HepG2 (cell line): ENCODE measurements at regions of chr10 and their contacts with region 1.

Region 1: GRCh38 chr10:104121520-104122224 is at the start of gene SFR1:
- DNase-seq: peak; percentile 95
- ATAC-seq: peak; percentile 95
- H3K4me3 ChIP-seq: peak within 1 kb of the TSS; percentile 78 to 87 (median 83)
- H3K27ac ChIP-seq: peak within 1 kb of the TSS; percentile 98
- H3K4me1 ChIP-seq: peaks cover 23% of the 10 kb centered on the region
- H3K27me3 ChIP-seq: peaks cover 0 to 2% of the 10 kb centered on the region in 2 experiments; a peak in 1 of 5 replicates
- CTCF ChIP-seq: peak; percentile 90
- EP300 ChIP-seq: no peak; a peak in 1 of 4 replicates
- POLR2A ChIP-seq: peak; percentile 71 to 92
- RAD21 ChIP-seq: peak; percentile 50
- total RNA-seq, gene SFR1: 6.1 and 6.9 TPM in 2 replicates

Region 2: DNA sequence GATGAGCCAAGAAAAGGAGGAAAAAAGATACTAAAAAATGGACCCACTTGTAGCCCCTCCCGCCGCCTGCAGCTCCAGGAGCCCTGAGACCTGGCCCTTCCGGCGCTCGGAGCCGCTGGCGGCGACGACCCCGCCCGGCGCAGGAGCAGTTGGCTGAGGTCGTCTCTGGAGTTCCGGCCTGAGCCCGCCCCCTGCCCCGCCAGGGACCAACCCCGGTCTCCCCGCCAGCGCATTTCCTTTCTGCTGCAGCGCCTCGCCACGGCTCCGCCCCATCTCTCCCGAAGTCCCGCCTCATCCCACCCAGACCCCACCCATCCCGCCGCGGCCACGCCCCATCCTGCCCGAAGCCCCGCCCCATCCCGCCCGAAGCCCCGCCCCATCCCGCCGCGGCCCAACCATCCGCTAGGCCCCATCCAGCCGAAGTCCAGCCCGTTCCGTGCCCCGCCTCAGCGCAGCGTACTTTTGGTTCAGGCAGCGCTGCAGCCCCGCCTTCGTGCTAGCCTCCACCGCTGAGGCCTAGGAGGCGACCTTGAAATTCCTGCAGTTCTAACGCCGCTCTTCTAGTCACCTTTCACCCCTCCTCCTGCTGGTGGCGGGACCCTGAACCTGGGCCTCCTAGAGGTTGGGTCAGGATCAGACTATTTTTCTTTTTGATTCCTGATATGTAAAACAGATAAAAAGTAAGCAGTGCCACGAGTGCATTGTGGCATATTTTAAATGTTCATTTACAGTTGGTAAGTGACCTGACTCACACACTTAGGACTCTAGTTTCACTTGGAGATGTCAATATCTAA is 203.4 kb before region 1 on chr10 and contains the start of gene STN1:
- CTCF ChIA-PET with region 1: no interaction called
- POLR2A ChIA-PET with region 1: interaction called, 3 read pairs
- in situ Hi-C with region 1: no loop called
- intact Hi-C with region 1: loop called (anchors 10 kb)
- DNase-seq: peak; percentile 95
- ATAC-seq: peak; percentile 97
- H3K4me3 ChIP-seq: peak within 1 kb of the TSS; percentile 78 to 95 (median 85)
- H3K27ac ChIP-seq: peak within 1 kb of the TSS; percentile 90
- H3K4me1 ChIP-seq: peaks cover 62% of the 10 kb centered on the region
- H3K27me3 ChIP-seq: no peaks in the 10 kb centered on the region; a peak in 1 of 5 replicates
- CTCF ChIP-seq: peak; percentile 47
- EP300 ChIP-seq: peak in 1 of 2 experiments; percentile 94; a peak in 3 of 4 replicates
- POLR2A ChIP-seq: peak; percentile 83 to 95
- RAD21 ChIP-seq: 0 out of 2 replicates have a peak, but pooled peaks have one; percentile 24
- total RNA-seq, gene STN1: 22.7 and 27.7 TPM in 2 replicates

Region 3: DNA sequence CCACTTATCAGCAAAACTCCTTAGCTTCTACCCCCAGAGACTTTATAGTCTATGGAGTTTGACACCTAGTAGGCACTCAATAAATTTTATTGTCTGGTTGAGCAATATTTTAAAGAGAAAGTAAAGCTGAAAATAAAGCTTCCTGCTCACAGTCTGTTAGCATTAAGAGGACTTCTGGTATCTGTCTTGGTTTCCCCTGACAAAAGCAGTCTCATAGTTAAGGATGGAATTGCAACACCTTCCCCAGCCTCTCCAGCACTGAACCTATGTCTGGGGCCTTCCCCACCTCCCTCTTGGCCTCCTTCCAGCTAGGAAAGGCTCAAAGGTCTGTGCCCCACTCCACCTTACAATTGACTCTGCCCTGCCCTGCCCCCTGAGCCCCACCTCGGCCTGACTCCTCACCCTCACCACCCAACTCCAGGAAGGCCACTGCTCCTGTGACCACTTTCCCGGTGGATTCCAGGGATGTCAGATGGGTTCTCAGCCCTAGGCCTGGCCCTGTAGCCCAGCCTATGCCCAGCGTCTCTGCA is 69.3 kb before region 1 on chr10:
- CTCF ChIA-PET with region 1: no interaction called
- POLR2A ChIA-PET with region 1: no interaction called
- in situ Hi-C with region 1: no loop called
- intact Hi-C with region 1: loop called (anchors 2 kb)
- DNase-seq: no peak
- ATAC-seq: peak; percentile 41
- H3K4me3 ChIP-seq: no peak overlapping the region
- H3K27ac ChIP-seq: no peak overlapping the region
- H3K4me1 ChIP-seq: peaks cover 25% of the 10 kb centered on the region
- H3K27me3 ChIP-seq: peaks cover 2 to 37% of the 10 kb centered on the region in 2 experiments; a peak in 3 of 5 replicates
- CTCF ChIP-seq: no peak
- EP300 ChIP-seq: no peak
- POLR2A ChIP-seq: no peak
- RAD21 ChIP-seq: no peak

Region 4: GRCh38 chr10:104085801-104086400 is 35.8 kb before region 1 on chr10 and contains the start of gene COL17A1:
- CTCF ChIA-PET with region 1: no interaction called
- POLR2A ChIA-PET with region 1: no interaction called
- in situ Hi-C with region 1: no loop called
- intact Hi-C with region 1: no loop called
- DNase-seq: no peak
- ATAC-seq: no peak
- H3K4me3 ChIP-seq: no peak within 1 kb of the TSS
- H3K27ac ChIP-seq: no peak within 1 kb of the TSS
- H3K4me1 ChIP-seq: no peaks in the 10 kb centered on the region
- H3K27me3 ChIP-seq: peaks cover 0 to 4% of the 10 kb centered on the region in 2 experiments; a peak in 2 of 5 replicates
- CTCF ChIP-seq: no peak
- EP300 ChIP-seq: no peak
- POLR2A ChIP-seq: no peak
- RAD21 ChIP-seq: no peak
- total RNA-seq, gene COL17A1: not detected in 2 replicates

Region 5: DNA sequence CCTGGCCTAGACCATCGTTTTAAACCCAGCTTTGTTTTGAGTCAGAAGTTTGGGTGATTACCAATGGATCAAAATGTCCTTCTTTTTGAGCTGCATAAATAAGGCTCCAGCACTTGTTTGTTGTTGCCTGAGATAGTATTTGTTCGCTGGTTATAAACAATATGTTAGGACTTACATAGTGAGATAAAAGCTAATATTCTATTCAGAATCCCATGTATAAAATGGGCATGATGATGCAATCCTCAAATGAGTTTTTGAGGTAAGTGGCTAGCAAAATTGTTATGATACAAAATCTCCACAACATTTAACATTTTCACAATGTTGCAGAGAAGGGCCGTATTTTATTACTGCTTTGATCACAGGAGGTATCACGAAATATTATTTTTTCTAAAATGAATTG is 62.0 kb after region 1 on chr10:
- CTCF ChIA-PET with region 1: no interaction called
- POLR2A ChIA-PET with region 1: no interaction called
- in situ Hi-C with region 1: no loop called
- intact Hi-C with region 1: no loop called
- DNase-seq: no peak
- ATAC-seq: no peak
- H3K4me3 ChIP-seq: no peak overlapping the region
- H3K27ac ChIP-seq: no peak overlapping the region
- H3K4me1 ChIP-seq: no peaks in the 10 kb centered on the region
- H3K27me3 ChIP-seq: peaks cover 1 to 12% of the 10 kb centered on the region in 2 experiments; a peak in 2 of 5 replicates
- CTCF ChIP-seq: no peak
- EP300 ChIP-seq: no peak
- POLR2A ChIP-seq: no peak
- RAD21 ChIP-seq: no peak

Region 6: DNA sequence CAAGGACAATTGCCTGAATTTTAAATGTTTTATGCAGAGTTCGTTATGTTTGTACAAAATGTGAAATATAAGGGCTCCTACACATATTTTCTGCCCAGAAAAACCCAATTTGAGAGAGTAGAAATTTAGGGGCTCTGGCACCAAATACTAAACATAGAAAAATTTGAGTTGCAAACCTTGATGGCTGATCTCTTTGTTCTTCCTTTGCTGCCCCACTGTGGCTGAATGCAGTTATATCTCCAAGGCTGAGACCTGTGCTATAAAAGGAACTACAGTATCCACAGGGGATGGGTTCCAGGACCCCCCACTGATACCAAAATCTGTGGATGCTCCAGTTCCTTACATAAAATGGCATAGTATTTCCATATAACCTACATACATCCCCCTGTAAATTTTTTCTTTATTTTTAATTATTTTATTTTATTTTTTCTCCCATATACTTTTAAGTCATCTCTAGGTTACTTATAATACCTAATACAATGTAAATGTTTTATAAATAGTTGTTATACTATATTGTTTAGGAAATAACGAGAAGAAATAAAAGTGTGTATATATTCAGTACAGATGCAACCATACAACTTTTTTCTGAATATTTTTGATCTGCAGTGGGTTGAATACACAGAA is 88.0 kb after region 1 on chr10:
- CTCF ChIA-PET with region 1: no interaction called
- POLR2A ChIA-PET with region 1: no interaction called
- in situ Hi-C with region 1: no loop called
- intact Hi-C with region 1: loop called (anchors 5 kb)
- DNase-seq: peak; percentile 27
- ATAC-seq: peak; percentile 77
- H3K4me3 ChIP-seq: no peak overlapping the region
- H3K27ac ChIP-seq: no peak overlapping the region
- H3K4me1 ChIP-seq: no peaks in the 10 kb centered on the region
- H3K27me3 ChIP-seq: no peaks in the 10 kb centered on the region
- CTCF ChIP-seq: peak; percentile 66
- EP300 ChIP-seq: no peak
- POLR2A ChIP-seq: no peak
- RAD21 ChIP-seq: 0 out of 2 replicates have a peak, but pooled peaks have one; percentile 36

Region 7: DNA sequence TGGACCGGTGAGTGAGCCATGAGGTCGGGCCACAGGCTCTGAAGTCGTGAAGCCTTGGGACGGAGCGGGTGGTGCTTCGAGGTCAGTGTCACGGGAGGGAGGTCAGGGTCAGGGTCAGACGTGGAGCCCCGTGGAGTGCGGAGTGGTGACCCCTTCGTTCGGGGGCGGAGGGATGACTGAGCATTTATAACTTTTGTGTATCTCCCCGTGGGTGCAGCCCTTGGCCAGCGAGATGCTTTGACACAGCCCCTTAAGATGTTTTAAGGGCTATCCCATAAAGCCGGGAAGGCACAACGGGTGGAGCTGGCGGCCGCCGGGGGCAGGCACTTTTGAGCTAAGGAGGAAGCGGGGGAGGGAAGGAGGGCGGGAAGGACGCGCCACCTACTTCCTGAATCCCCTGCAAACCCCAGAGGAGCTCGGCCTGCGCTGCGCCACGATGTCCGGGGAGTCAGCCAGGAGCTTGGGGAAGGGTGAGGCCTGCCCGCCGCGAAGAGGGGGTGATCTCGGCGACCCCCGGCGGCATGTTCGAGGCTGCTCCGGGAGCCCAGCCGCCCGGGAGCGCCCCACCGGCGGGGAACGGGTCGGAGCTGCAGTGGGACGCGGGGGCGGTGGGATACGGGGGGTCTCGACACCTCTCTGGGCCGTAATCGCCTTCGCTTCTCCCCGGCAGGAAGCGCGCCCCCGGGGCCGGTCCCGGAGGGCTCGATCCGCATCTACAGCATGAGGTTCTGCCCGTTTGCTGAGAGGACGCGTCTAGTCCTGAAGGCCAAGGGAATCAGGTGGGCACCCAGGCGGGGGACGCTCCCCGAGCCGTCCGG is 133.0 kb after region 1 on chr10 and contains the start of gene GSTO1:
- CTCF ChIA-PET with region 1: no interaction called
- POLR2A ChIA-PET with region 1: interaction called, 6 read pairs
- in situ Hi-C with region 1: no loop called
- intact Hi-C with region 1: loop called (anchors 10 kb)
- DNase-seq: peak; percentile 35
- ATAC-seq: peak; percentile 39
- H3K4me3 ChIP-seq: peak within 1 kb of the TSS; percentile 83 to 88 (median 88)
- H3K27ac ChIP-seq: peak within 1 kb of the TSS; percentile 90
- H3K4me1 ChIP-seq: peaks cover 81% of the 10 kb centered on the region
- H3K27me3 ChIP-seq: no peaks in the 10 kb centered on the region; a peak in 1 of 5 replicates
- CTCF ChIP-seq: no peak
- EP300 ChIP-seq: peak in 1 of 2 experiments; percentile 56; a peak in 1 of 4 replicates
- POLR2A ChIP-seq: peak; percentile 33 to 74; a peak in 3 of 4 replicates
- RAD21 ChIP-seq: no peak
- total RNA-seq, gene GSTO1: 300 and 418 TPM in 2 replicates